AG04450 (cell line): ENCODE measurements at regions of chr4 and their contacts with region 1.

Region 1: GRCh38 chr4:94390804-94391410 is 48.3 kb upstream of the HPGDS start:
- DNase-seq: no peak
- H3K4me3 ChIP-seq: no peak overlapping the region
- H3K27ac ChIP-seq: no peak overlapping the region
- H3K27me3 ChIP-seq: no peaks in the 10 kb centered on the region
- CTCF ChIP-seq: peak; percentile 59

Region 2: GRCh38 chr4:94304365-94304971 is 86.4 kb before region 1 on chr4:
- CTCF ChIA-PET with region 1: interaction called, 14 read pairs
- POLR2A ChIA-PET with region 1: no interaction called
- DNase-seq: no peak
- H3K4me3 ChIP-seq: no peak overlapping the region
- H3K27ac ChIP-seq: no peak overlapping the region
- H3K27me3 ChIP-seq: no peaks in the 10 kb centered on the region
- CTCF ChIP-seq: peak; percentile 68

Region 3: GRCh38 chr4:94446386-94446785 is 55.5 kb after region 1 on chr4:
- CTCF ChIA-PET with region 1: no interaction called
- POLR2A ChIA-PET with region 1: no interaction called
- DNase-seq: peak; percentile 47
- H3K4me3 ChIP-seq: no peak overlapping the region
- H3K27ac ChIP-seq: no peak overlapping the region
- H3K27me3 ChIP-seq: no peaks in the 10 kb centered on the region
- CTCF ChIP-seq: no peak

Region 4: DNA sequence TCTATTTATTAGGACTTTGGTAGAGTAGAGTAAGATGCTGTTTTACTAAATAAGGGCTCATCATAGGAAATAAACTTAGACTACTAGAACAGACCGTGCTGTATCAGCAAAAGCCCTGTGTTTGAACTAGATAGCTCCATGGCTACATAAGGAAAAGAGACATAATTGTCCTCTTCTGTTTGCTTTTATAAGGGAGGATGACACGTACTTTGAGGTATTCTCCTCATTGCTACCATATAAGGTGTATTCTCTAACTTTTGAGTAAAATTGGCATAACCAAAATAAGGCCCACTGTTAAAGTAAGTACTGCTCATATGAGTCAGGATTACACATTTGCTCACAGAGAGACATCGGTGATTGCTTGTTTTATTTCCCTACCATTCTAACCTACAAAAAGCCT is 125.2 kb after region 1 on chr4:
- CTCF ChIA-PET with region 1: no interaction called
- POLR2A ChIA-PET with region 1: no interaction called
- DNase-seq: peak; percentile 64
- H3K4me3 ChIP-seq: no peak overlapping the region
- H3K27ac ChIP-seq: peak overlapping the region; percentile 81
- H3K27me3 ChIP-seq: no peaks in the 10 kb centered on the region
- CTCF ChIP-seq: no peak